ENCODE measurements at regions of chr2 and their contacts with region 1.

Region 1: GRCh38 chr2:71000780-71001591 is 6.3 kb upstream of the TEX261 start:
- DNase-seq: peak; percentile 35
- H3K4me3 ChIP-seq: peak overlapping the region; percentile 29 to 42 (median 31)
- H3K27ac ChIP-seq: no peak overlapping the region
- H3K4me1 ChIP-seq: peaks cover 6% of the 10 kb centered on the region
- H3K27me3 ChIP-seq: no peaks in the 10 kb centered on the region
- CTCF ChIP-seq: peak; percentile 90 to 93

Region 2: GRCh38 chr2:69755862-69756467 is 1245.0 kb before region 1 on chr2:
- CTCF ChIA-PET with region 1: interaction called, 13 read pairs
- dilution Hi-C with region 1: no loop called
- in situ Hi-C with region 1: no loop called
- intact Hi-C with region 1: no loop called
- DNase-seq: peak; percentile 94
- H3K4me3 ChIP-seq: peak overlapping the region in 1 of 3 experiments; percentile 27
- H3K27ac ChIP-seq: peak overlapping the region; percentile 59
- H3K4me1 ChIP-seq: peaks cover 21% of the 10 kb centered on the region
- H3K27me3 ChIP-seq: no peaks in the 10 kb centered on the region
- CTCF ChIP-seq: no peak

Region 3: GRCh38 chr2:70778676-70779075 is 222.3 kb before region 1 on chr2:
- CTCF ChIA-PET with region 1: interaction called, 11 read pairs
- dilution Hi-C with region 1: no loop called
- in situ Hi-C with region 1: no loop called
- intact Hi-C with region 1: no loop called
- DNase-seq: no peak
- H3K4me3 ChIP-seq: no peak overlapping the region
- H3K27ac ChIP-seq: no peak overlapping the region
- H3K4me1 ChIP-seq: peaks cover 11% of the 10 kb centered on the region
- H3K27me3 ChIP-seq: no peaks in the 10 kb centered on the region
- CTCF ChIP-seq: no peak

Region 4: DNA sequence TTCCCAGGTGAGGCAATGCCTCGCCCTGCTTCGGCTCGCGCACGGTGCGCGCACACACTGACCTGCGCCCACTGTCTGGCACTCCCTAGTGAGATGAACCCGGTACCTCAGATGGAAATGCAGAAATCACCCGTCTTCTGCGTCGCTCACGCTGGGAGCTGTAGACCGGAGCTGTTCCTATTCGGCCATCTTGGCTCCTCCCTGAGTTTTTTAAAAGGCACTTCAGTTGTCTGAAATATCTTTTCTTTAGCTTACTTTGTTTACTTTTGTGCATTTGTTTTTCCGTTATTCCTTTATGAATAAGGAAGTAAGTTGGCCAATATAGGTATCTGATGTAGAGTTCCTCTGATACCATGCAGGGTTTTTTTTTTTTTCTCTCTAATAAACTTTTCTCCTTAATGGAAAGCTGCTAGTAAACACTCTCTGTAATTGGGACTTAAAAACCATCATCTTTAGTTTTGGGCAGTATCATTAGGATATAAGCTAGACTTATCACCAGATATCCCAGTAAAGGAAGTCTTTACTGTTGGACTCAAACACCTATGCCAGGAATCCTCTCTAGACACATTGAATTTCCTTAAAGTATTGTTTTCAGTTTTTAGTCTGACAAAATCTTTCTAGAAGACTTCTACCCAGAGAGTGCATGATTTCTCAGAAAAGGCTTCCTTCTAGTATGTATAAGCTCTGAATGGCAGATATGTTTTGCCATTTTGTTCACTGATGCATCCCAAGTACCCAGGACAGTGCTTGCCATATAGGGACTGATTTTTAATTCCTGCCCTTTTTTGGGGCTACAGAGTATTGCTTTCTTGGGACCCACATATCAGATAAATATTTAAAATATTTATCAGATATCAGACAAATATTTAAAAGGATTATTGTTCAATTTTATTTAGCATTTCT is 416.6 kb after region 1 on chr2:
- CTCF ChIA-PET with region 1: no interaction called
- dilution Hi-C with region 1: no loop called
- in situ Hi-C with region 1: no loop called
- intact Hi-C with region 1: no loop called
- DNase-seq: peak; percentile 23
- H3K4me3 ChIP-seq: peak overlapping the region; percentile 34 to 44 (median 44)
- H3K27ac ChIP-seq: peak overlapping the region; percentile 92
- H3K4me1 ChIP-seq: peaks cover 5% of the 10 kb centered on the region
- H3K27me3 ChIP-seq: no peaks in the 10 kb centered on the region
- CTCF ChIP-seq: no peak

Measured in mammary epithelial cell (primary cell).